K562 (cell line): ENCODE measurements at regions of chr22 and their contacts with region 1.

Region 1: DNA sequence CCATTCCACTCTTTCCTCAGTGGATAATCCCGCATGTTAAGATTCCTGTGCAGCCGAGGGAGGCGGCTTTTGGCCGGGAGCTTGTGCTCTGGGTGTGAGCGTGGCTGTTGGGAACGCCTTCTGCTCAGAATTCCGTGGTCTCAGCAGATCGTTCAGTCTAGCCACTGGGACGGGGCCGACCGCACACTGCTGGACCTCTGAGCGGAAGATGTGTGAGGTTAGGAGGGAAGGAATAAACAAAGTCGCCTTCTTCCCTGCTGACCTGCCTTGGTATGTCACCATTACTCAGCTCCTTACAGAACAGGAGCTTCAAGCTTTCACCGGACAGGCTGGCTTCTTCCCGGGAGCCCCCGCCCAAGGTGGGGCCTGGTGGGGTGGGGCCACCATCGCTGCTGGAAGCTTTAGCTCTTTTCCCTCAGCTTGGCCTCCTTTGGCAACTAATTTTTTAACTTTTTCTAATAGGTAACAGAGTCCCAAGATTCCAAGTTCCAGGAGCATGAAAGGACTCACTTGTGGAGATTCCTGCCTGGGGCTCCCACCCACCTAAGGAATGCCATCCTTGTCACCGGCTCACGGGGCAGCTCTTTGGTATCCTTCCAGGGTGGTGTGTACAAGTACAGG is 22.5 kb upstream of the SEPTIN5 start:
- DNase-seq: peak; percentile 85 to 93 (median 92)
- ATAC-seq: peak; percentile 79
- H3K4me3 ChIP-seq: peak overlapping the region; percentile 3; the same call in 1 of the 2 replicates
- H3K27ac ChIP-seq: peak overlapping the region; percentile 47
- H3K4me1 ChIP-seq: peaks cover 24 to 58% of the 10 kb centered on the region in 2 experiments; a peak in 4 of 5 replicates
- H3K27me3 ChIP-seq: peaks cover 21 to 40% of the 10 kb centered on the region in 2 experiments
- CTCF ChIP-seq: peak in 1 of 3 experiments; percentile 14; a peak in 1 of 6 replicates
- EP300 ChIP-seq: no peak; the same call in 1 of the 2 replicates
- POLR2A ChIP-seq: peak; percentile 77
- RAD21 ChIP-seq: no peak

Region 2: DNA sequence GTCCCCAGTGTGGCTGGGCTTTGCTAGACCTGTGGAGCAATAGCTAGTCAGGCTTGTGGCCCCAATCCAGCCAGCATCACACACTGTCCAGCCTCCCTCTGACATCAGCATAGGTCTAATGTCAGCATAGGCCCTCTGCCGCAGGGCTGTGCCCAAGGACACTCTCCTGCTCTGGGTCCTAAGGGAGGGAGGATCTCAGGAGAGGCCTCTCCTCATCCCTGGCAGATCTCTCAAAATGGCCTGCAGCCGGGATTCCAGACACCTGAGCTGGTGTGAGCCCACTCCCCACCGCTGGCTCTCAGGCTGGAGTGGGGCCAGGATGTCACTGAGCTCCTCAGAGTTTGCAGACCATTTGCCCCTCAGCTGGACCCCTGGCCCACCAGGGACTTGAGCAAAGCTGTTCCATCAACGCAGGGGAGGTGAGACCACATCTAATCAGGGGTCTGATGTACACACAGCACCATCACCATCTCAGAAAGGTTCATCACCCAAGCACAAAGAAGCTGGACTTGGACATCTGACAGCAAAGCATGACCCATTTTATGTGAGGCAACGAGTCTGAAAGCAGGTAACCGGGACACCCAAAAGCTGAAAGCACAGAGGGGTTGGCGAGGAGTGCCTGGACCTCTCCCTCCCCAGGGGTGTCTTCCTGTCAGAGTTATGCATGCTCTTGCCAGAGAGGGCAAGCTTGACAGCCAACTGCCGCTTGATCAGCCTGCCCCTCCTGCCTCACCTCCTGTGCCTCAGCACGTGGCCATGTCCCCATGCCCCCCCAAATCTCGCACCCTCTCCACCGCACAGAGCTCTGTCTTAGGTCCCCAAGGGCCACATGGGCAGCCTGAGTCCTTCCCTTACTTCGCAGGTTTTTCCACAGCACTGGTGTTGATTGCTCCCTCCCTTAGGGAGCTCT is 47.3 kb before region 1 on chr22:
- CTCF ChIA-PET with region 1: no interaction called
- POLR2A ChIA-PET with region 1: interaction called, 7 read pairs
- in situ Hi-C with region 1: no loop called
- intact Hi-C with region 1: loop called (anchors 2 kb)
- DNase-seq: peak; percentile 70 to 79 (median 73)
- ATAC-seq: peak; percentile 75
- H3K4me3 ChIP-seq: no peak overlapping the region
- H3K27ac ChIP-seq: peak overlapping the region; percentile 12; the same call in 2 of the 3 replicates
- H3K4me1 ChIP-seq: peaks cover 35 to 37% of the 10 kb centered on the region in 2 experiments; a peak in 4 of 5 replicates
- H3K27me3 ChIP-seq: peaks cover 0 to 6% of the 10 kb centered on the region in 2 experiments; a peak in 1 of 5 replicates
- CTCF ChIP-seq: peak in 1 of 3 experiments; percentile 15; a peak in 1 of 6 replicates
- EP300 ChIP-seq: no peak
- POLR2A ChIP-seq: no peak
- RAD21 ChIP-seq: 0 out of 4 replicates have a peak, but pooled peaks of 1 of the 2 experiments have one; percentile 3

Region 3: DNA sequence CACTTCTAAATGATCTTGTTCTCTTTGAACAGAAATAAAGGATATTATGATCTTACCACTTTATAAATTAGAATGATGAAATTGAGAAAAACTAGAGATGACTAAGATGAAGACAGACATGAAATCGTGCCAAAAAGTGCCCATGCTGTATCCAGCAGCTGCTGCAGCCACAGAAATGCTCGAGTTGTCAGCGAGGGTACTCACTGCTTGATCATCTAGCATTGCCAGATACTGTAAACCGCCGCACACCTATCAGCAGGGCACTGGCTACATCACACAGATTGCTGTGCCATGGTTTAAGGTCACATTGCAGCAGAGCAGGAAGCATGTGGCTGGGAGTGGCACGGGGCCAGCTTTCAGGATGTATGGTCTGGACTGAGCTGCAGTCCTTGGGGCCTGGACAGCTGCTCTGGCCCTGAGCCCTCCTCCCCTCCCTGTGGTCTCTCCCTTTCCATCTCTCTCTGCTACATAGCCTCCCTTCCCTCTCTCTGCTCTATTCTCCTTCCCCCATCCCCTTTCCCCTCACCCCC is 28.5 kb before region 1 on chr22:
- CTCF ChIA-PET with region 1: no interaction called
- POLR2A ChIA-PET with region 1: interaction called, 10 read pairs
- in situ Hi-C with region 1: no loop called
- intact Hi-C with region 1: no loop called
- DNase-seq: peak in 1 of 4 experiments; percentile 29
- ATAC-seq: peak; percentile 24
- H3K4me3 ChIP-seq: no peak overlapping the region
- H3K27ac ChIP-seq: no peak overlapping the region
- H3K4me1 ChIP-seq: peaks cover 15 to 23% of the 10 kb centered on the region in 2 experiments
- H3K27me3 ChIP-seq: peaks cover 55 to 58% of the 10 kb centered on the region in 2 experiments
- CTCF ChIP-seq: no peak
- EP300 ChIP-seq: no peak
- POLR2A ChIP-seq: no peak
- RAD21 ChIP-seq: no peak

Region 4: GRCh38 chr22:19674129-19674928 is 17.5 kb before region 1 on chr22:
- CTCF ChIA-PET with region 1: no interaction called
- POLR2A ChIA-PET with region 1: interaction called, 40 read pairs
- in situ Hi-C with region 1: no loop called
- intact Hi-C with region 1: no loop called
- DNase-seq: peak in 1 of 4 experiments; percentile 22
- ATAC-seq: no peak
- H3K4me3 ChIP-seq: no peak overlapping the region
- H3K27ac ChIP-seq: no peak overlapping the region
- H3K4me1 ChIP-seq: peaks cover 0 to under 1% of the 10 kb centered on the region in 2 experiments; a peak in 2 of 5 replicates
- H3K27me3 ChIP-seq: peaks cover 39 to 55% of the 10 kb centered on the region in 2 experiments
- CTCF ChIP-seq: no peak
- EP300 ChIP-seq: no peak
- POLR2A ChIP-seq: no peak
- RAD21 ChIP-seq: no peak

Region 5: GRCh38 chr22:19705181-19705934 is 13.5 kb after region 1 on chr22:
- CTCF ChIA-PET with region 1: interaction called, 5 read pairs
- POLR2A ChIA-PET with region 1: interaction called, 52 read pairs
- in situ Hi-C with region 1: no loop called
- intact Hi-C with region 1: no loop called
- DNase-seq: peak in 3 of 4 experiments; percentile 43 to 59 (median 47)
- ATAC-seq: peak; percentile 20
- H3K4me3 ChIP-seq: no peak overlapping the region
- H3K27ac ChIP-seq: no peak overlapping the region
- H3K4me1 ChIP-seq: peaks cover 3 to 36% of the 10 kb centered on the region in 2 experiments; a peak in 3 of 5 replicates
- H3K27me3 ChIP-seq: peaks cover 59 to 81% of the 10 kb centered on the region in 2 experiments
- CTCF ChIP-seq: peak; percentile 53 to 75 (median 65)
- EP300 ChIP-seq: no peak
- POLR2A ChIP-seq: no peak
- RAD21 ChIP-seq: peak in 1 of 2 experiments; percentile 37; a peak in 2 of 4 replicates

Region 6: DNA sequence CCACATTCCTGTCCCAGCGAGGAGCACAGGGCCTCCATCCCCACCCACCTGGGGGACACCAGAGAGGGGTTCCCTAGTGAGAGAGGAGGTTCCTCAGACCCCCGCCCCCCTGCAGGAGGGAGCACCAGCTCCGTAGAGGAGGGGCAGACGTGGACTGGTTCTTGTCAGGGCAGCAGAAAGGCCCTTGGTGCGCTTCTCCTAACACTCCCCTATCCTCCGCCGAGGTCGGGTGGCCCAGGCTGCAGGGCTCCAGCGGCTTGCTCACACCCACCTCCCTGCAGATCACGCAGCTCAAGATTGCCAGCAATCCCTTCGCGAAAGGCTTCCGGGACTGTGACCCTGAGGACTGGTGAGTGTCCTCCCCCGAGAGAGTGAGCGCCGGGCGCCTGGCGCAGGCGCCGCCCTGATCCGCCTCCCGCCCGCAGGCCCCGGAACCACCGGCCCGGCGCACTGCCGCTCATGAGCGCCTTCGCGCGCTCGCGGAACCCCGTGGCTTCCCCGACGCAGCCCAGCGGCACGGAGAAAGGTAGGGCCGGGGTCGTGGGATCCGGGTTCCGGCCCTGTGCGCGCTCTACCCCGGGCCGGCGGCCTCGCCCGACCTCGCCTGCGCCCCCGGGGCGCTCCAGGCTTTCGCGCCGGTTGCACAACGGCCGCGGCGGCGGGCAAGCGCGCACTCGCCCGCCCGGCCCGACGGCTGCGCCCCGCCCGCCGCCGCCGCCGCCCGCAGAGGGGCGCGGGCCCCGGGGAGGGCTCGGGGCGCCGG is 73.8 kb after region 1 on chr22:
- CTCF ChIA-PET with region 1: no interaction called
- POLR2A ChIA-PET with region 1: no interaction called
- in situ Hi-C with region 1: no loop called
- intact Hi-C with region 1: no loop called
- DNase-seq: peak; percentile 64 to 82 (median 75)
- ATAC-seq: peak; percentile 1
- H3K4me3 ChIP-seq: no peak overlapping the region
- H3K27ac ChIP-seq: peak overlapping the region; percentile 2; the same call in 1 of the 3 replicates
- H3K4me1 ChIP-seq: peaks cover 6 to 92% of the 10 kb centered on the region in 2 experiments; a peak in 3 of 5 replicates
- H3K27me3 ChIP-seq: peaks cover 0 to 10% of the 10 kb centered on the region in 2 experiments; a peak in 2 of 5 replicates
- CTCF ChIP-seq: no peak; a peak in 1 of 6 replicates
- EP300 ChIP-seq: no peak
- POLR2A ChIP-seq: no peak
- RAD21 ChIP-seq: no peak